ENCODE measurements at regions of chr7 and their contacts with region 1.

Region 1: DNA sequence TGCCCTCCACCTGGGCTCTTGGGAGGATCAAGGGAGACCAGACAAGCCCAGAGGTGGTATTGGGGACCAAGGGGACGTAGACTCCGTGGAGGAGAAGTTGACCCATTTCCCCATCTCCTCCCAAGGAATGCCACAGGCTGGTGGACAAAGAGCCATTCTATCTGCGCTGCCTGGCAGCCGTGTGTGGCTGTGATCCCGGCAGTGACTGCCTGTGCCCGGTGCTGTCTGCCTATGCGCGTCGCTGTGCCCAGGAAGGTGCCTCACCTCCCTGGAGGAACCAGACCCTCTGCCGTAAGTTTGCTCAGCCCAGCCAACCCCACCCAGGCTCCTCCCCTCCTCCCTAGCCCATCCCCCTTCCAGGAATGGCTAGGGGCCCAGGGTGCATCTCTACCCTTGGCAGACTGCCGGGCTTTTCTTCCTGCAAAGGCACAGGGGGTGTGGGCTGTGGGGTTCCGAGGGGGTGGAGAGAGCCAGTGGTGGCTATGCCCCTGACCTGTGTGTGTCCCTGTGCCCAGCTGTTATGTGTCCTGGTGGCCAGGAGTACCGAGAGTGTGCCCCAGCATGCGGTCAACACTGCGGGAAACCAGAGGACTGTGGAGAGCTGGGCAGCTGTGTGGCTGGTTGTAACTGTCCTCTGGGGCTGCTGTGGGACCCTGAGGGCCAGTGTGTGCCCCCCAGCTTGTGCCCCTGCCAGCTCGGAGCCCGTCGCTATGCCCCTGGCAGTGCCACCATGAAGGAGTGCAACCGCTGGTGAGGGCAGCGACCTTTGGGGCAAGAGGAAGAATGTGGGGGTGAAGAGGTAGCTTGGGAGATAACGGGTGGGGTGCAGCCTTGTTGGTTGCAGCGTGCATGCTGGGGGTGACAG is 10.2 kb upstream of the ZNF467 start:
- DNase-seq: no peak
- H3K4me3 ChIP-seq: no peak overlapping the region
- H3K27ac ChIP-seq: no peak overlapping the region
- H3K4me1 ChIP-seq: peaks cover 0 to 35% of the 10 kb centered on the region in 2 experiments; a peak in 1 of 4 replicates
- H3K27me3 ChIP-seq: peaks cover 11% of the 10 kb centered on the region; the same call in 1 of the 2 replicates
- CTCF ChIP-seq: no peak
- EP300 ChIP-seq: no peak
- RAD21 ChIP-seq: no peak

Region 2: GRCh38 chr7:149133028-149133705 is 650.5 kb before region 1 on chr7:
- CTCF ChIA-PET with region 1: no interaction called
- POLR2A ChIA-PET with region 1: no interaction called
- DNase-seq: no peak
- H3K4me3 ChIP-seq: no peak overlapping the region
- H3K27ac ChIP-seq: no peak overlapping the region
- H3K4me1 ChIP-seq: peaks cover under 1 to 3% of the 10 kb centered on the region in 2 experiments; a peak in 2 of 4 replicates
- H3K27me3 ChIP-seq: no peaks in the 10 kb centered on the region
- CTCF ChIP-seq: no peak
- EP300 ChIP-seq: no peak
- RAD21 ChIP-seq: no peak

Region 3: GRCh38 chr7:149771721-149772240 is 11.8 kb before region 1 on chr7:
- CTCF ChIA-PET with region 1: interaction called, 132 read pairs
- POLR2A ChIA-PET with region 1: interaction called, 3 read pairs
- DNase-seq: peak; percentile 99
- H3K4me3 ChIP-seq: peak overlapping the region; percentile 61 to 65
- H3K27ac ChIP-seq: peak overlapping the region in 1 of 2 experiments; percentile 74; a peak in 1 of 4 replicates
- H3K4me1 ChIP-seq: peaks cover 4 to 33% of the 10 kb centered on the region in 2 experiments; a peak in 1 of 4 replicates
- H3K27me3 ChIP-seq: peaks cover 21% of the 10 kb centered on the region
- CTCF ChIP-seq: no peak
- EP300 ChIP-seq: no peak
- RAD21 ChIP-seq: no peak

Measured in SK-N-SH (cell line).